Posterior vena cava (tissue), 2 donors: ENCODE measurements at regions of chr11 and their contacts with region 1.

Region 1: DNA sequence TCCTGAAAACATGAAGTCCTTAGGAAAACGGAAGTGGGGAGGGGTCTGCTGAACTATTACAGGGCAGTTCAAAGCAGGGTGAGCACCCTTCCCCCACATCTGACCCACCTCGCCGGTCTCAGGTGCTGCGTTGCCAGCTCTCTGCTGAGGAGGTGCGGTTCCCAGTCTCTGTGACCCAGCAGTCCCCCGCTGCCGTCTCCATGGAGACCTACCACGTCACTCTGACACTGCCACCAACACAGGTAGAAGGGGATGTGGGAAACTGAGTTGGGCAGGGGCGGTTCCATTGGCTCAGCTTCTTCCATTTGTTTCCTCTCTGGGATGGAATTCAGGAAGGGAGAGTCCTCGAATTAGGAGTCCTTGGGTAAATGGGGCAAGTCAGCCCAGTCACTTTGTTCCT is 3.3 kb downstream of the C2CD2L start:
- DNase-seq: no peak

Region 2: DNA sequence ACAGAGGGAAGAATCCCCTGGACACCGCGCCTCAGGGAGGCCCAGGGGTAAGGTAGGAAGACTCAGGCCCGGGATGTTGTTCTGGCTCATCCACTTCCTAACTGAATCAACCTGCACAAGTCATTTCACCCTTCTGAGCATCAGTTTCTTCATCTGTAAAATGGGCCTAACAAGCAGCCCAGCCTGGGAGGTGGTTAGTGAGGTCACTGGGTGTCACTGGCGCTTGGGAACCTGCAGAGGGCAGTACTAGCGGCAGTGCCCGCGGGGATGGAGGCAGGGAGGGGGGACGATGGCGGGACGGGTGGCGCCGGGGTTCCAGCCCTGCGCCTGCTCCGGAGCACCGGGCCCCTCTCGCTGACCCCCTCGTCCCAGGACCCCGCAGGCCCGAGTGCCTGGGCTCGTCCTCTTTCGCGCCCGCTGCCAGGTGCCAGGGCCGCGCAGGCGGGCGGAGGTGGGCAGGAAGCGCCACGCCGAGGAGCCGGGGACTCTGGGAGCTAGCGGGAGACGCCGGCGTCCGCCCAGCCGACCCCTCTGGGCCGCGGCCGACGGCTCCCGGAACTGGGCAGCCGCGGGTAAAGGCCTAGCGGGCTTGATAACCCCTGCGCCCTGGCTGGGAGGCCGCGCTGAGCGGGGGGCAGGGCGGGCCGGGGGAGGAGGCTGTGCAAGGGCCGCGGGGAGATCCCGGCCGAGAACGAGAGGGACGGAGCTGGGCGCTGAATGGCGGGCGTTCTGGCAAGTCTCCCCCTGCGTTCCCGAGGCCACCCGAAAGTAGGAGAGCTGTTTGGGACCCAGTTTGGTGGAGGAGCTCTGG is 58.2 kb after region 1 on chr11 and contains the start of gene NLRX1:
- intact Hi-C with region 1: loop called in 1 of 2 experiments (anchors 1 kb)
- DNase-seq: peak; percentile 96
- total RNA-seq, gene NLRX1: 14.9 to 23.9 TPM